Dendritic cell treated with granulocyte-macrophage colony-stimulating factor and Interleukin-4, amounts not matched to agents 40 ng/mL and 50 ng/mL, for 4 days (primary cell): ENCODE measurements at regions of chrX and their contacts with region 1.

Region 1: DNA sequence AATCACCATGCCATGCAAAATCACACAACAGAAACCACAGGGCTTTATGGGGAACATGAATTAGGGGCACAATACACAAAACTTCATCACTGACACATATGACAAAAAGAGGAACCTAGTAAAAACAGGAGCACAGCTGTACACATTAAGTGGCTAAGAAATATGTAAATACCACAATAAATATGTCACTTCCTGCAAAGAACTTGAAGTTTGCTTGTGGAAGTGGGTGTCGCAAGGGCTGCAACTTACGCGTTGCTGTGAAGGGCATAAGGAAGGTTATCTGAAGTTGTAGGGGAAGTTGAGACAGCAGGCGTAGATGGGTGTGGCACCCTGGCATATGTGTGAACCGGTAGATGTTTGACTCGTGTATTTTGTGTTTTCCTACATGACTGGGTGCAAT is 42.4 kb downstream of the CLCN4 start:
- H3K4me3 Mint-ChIP-seq: no peak overlapping the region
- H3K27ac Mint-ChIP-seq: peak overlapping the region; percentile 84
- H3K4me1 Mint-ChIP-seq: peaks cover 25% of the 10 kb centered on the region
- H3K27me3 Mint-ChIP-seq: no peaks in the 10 kb centered on the region

Region 2: GRCh38 chrX:11341274-11342201 is 1142.3 kb after region 1 on chrX:
- intact Hi-C with region 1: loop called (anchors 5 kb)
- H3K4me3 Mint-ChIP-seq: peak overlapping the region; percentile 9
- H3K27ac Mint-ChIP-seq: peak overlapping the region; percentile 80
- H3K4me1 Mint-ChIP-seq: peaks cover 20% of the 10 kb centered on the region
- H3K27me3 Mint-ChIP-seq: peaks cover 7% of the 10 kb centered on the region